Activated CD4-positive, alpha-beta memory T cell treated with anti-CD3 and anti-CD28 coated beads for 36 hours (primary cell): ENCODE measurements at regions of chr17 and their contacts with region 1.

Region 1: GRCh38 chr17:36755586-36755985 is 154.2 kb downstream of the MRM1 start:
- DNase-seq: peak; percentile 58
- H3K4me3 Mint-ChIP-seq: no peak overlapping the region
- H3K27ac Mint-ChIP-seq: no peak overlapping the region
- H3K4me1 Mint-ChIP-seq: no peaks in the 10 kb centered on the region
- H3K27me3 Mint-ChIP-seq: no peaks in the 10 kb centered on the region

Region 2: GRCh38 chr17:36705874-36706731 is 49.5 kb before region 1 on chr17:
- CTCF ChIA-PET with region 1: interaction called, 28 read pairs
- POLR2A ChIA-PET with region 1: no interaction called
- intact Hi-C with region 1: no loop called
- DNase-seq: peak; percentile 67
- H3K4me3 Mint-ChIP-seq: no peak overlapping the region
- H3K27ac Mint-ChIP-seq: no peak overlapping the region
- H3K4me1 Mint-ChIP-seq: no peaks in the 10 kb centered on the region
- H3K27me3 Mint-ChIP-seq: peaks cover 28% of the 10 kb centered on the region

Region 3: DNA sequence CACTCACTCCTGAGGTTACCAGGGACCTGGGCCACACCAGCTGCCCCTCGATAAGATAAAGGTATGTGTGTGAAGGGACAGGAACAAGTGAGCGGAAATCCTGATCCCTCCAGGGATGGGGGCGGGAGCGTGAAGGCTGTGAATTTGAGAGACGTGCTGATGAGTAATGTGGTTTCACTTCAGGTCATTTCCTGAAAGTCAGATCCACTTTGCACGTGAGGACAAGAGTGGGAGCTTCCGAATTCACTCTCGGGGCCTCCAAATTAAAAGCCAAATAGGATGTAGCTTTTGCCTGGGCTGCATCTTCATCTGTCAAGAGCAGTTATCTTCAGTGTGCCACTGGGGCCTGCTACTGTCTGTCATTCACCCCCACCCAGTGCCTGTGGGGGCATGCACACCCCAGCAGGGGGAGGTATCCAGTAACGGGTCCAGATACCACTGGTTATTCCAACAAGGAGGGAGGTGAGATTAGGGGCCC is 94.3 kb after region 1 on chr17:
- CTCF ChIA-PET with region 1: no interaction called
- POLR2A ChIA-PET with region 1: no interaction called
- intact Hi-C with region 1: no loop called
- DNase-seq: peak; percentile 88
- H3K4me3 Mint-ChIP-seq: peak overlapping the region; percentile 62
- H3K27ac Mint-ChIP-seq: peak overlapping the region; percentile 82
- H3K4me1 Mint-ChIP-seq: peaks cover 36% of the 10 kb centered on the region
- H3K27me3 Mint-ChIP-seq: peaks cover under 1% of the 10 kb centered on the region